GM13976 (cell line): ENCODE measurements at regions of chr5 and their contacts with region 1.

Region 1: DNA sequence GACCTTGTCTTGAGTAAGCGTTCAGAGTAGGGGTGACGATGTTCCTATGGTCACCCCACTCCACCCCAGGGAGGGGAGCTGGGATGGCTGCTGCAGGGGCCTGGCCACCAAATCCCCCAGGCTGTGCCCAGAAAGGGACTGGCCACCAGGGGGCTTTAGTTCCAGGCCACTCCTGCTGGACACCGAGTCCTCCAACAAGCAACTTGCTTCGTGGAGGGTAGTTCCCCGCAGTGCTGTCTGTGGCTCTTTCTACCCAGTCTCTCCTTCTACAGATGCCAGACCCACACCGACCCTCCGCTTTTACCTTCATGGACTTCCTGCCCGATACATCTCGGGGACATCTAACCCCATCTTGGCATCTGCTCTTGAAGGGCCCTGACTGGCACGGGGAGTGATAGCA is 35.7 kb upstream of the GABRP start:
- DNase-seq: no peak
- CTCF ChIP-seq: no peak

Region 2: GRCh38 chr5:171342362-171343111 is 594.7 kb after region 1 on chr5:
- in situ Hi-C with region 1: loop called (anchors 25 kb)
- DNase-seq: peak; percentile 67
- CTCF ChIP-seq: peak; percentile 52